Posterior vena cava (tissue), 2 donors: ENCODE measurements at regions of chr2 and their contacts with region 1.

Region 1: DNA sequence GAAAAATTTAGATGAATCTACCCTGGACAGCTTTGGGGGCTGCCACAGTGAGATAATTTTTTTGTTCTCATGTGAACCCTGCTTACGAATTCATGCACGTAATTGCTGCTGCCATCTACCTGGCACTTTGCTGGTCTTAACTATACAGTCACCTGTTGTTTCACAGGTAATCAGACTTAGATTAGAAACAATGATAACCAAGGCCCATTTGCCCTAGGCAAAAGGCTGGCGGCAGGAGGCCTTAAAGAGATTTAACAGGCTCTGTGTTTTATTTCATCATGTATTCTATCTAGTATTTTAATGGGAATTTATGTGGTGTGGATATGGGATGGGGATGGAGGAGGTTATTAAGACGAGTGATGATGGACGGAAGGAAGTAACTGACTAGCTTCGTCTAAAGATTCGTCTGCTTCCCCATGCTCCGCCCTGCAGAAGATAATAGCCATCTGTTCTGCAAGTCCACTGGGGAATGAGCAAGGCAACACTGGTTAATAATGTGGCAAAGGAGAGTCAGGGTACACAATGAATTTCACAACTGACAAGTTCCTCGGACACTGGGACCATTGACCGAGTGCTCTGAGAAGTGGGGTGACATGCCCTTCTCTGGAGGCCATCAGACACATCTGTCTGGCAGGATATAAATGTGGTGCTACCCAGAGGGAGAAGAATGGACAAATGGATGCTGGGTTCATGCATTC is 291.8 kb upstream of the TNP1 start:
- DNase-seq: no peak

Region 2: DNA sequence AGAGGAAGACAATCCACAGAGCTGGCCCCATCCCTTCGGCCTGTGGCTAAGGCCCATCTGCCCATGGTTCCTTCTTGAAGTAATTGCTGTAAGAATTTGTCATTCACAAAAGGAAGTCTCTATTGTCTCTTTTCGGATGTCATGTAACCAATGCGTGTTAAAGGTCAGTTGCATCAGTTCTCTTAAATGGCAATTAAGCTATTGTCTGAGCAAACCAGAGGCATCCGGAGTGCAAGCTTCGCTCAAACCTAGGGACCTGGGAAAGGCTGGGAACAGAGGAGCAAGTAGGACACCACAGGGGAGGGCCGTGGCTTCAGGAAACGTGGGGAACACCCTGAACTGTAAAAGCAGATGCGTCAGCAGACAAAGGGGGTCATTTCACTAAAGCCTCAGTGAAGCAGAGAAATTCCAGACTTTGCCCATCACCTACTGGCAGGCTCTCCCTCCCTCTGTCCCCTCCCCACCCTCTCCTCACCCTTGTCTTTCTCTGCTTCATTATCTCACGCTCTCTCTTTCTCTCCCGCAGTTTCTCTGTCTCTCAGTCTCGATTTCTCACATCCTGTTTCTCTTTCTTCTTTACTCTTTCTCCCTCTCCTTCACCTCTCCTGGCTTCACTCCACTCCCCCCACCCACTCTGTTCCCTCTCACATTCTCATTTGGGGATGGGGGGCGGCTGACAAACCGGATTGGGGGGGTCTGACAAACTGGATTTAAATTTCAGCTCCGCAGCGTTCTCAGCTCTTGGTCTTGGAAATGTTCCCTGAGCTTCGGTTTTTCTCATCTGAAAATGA is 87.2 kb before region 1 on chr2:
- intact Hi-C with region 1: loop called in 1 of 2 experiments (anchors 10 kb)
- DNase-seq: no peak